Mammary epithelial cell (primary cell): ENCODE measurements at regions of chr9 and their contacts with region 1.

Region 1: GRCh38 chr9:36407122-36407723 is 7.2 kb upstream of the RNF38 start:
- DNase-seq: peak; percentile 60
- H3K4me3 ChIP-seq: no peak overlapping the region
- H3K27ac ChIP-seq: no peak overlapping the region
- H3K4me1 ChIP-seq: no peaks in the 10 kb centered on the region
- H3K27me3 ChIP-seq: no peaks in the 10 kb centered on the region
- CTCF ChIP-seq: peak; percentile 86 to 96

Region 2: DNA sequence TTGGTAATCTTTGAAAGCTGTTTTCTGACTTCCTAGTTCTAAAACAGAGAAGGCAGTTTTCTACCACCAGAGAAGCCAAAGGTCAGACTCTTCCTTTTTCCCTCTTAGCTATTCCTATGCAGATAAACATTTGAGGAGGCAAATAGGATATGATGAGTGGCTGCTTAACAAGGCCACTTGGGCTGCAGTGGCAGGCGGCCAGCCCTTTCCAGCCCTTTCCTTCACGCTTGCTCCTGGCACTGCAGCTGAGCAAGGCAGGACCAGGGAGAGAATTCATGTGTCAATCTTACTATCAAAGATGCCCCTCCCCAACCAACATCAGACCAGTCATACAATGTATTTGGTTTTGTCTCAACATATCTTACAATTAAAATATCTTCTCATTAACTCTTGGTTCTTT is 29.7 kb after region 1 on chr9:
- CTCF ChIA-PET with region 1: interaction called, 10 read pairs
- dilution Hi-C with region 1: no loop called
- in situ Hi-C with region 1: no loop called
- intact Hi-C with region 1: no loop called
- DNase-seq: no peak
- H3K4me3 ChIP-seq: no peak overlapping the region
- H3K27ac ChIP-seq: no peak overlapping the region
- H3K4me1 ChIP-seq: no peaks in the 10 kb centered on the region
- H3K27me3 ChIP-seq: no peaks in the 10 kb centered on the region
- CTCF ChIP-seq: no peak

Region 3: DNA sequence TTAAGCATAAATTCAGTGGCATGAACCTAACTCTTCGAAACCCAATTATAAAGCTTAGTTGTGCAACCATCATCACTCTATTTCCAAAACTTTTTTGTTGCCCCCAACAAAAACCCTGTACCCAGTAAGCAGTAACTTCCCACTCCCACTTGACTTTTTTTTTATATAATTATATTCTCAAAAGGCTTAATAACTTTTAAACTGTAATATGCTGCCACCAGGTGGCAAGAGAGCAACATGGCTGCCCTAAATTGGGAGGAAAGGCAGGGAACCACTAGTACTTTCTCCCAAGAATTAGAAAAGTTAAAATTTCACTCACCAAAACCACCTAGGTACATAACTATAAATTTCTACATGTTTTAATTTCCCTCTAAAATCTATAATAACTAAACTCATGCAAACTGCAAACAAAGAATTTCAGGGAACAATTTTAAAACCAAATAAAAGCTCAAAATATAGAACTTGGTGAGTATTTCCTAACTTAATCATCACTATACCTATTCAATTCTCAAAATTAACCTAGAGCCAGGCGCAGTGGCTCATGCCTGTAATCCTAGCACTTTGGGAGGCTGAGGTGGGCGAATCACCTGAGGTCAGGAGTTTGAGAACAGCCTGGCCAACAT is 43.0 kb after region 1 on chr9:
- CTCF ChIA-PET with region 1: interaction called, 8 read pairs
- dilution Hi-C with region 1: no loop called
- in situ Hi-C with region 1: no loop called
- intact Hi-C with region 1: loop called (anchors 1 kb)
- DNase-seq: peak; percentile 26
- H3K4me3 ChIP-seq: no peak overlapping the region
- H3K27ac ChIP-seq: no peak overlapping the region
- H3K4me1 ChIP-seq: no peaks in the 10 kb centered on the region
- H3K27me3 ChIP-seq: no peaks in the 10 kb centered on the region
- CTCF ChIP-seq: peak; percentile 65 to 74

Region 4: GRCh38 chr9:36551129-36551528 is 143.9 kb after region 1 on chr9:
- CTCF ChIA-PET with region 1: interaction called, 3 read pairs
- dilution Hi-C with region 1: no loop called
- in situ Hi-C with region 1: loop called in 1 of 2 experiments (anchors 10 kb)
- intact Hi-C with region 1: loop called (anchors 1 kb)
- DNase-seq: no peak
- H3K4me3 ChIP-seq: no peak overlapping the region
- H3K27ac ChIP-seq: no peak overlapping the region
- H3K4me1 ChIP-seq: no peaks in the 10 kb centered on the region
- H3K27me3 ChIP-seq: no peaks in the 10 kb centered on the region
- CTCF ChIP-seq: no peak

Region 5: GRCh38 chr9:36572515-36573418 is 165.5 kb after region 1 on chr9 and contains the start of gene MELK:
- CTCF ChIA-PET with region 1: no interaction called
- dilution Hi-C with region 1: no loop called
- in situ Hi-C with region 1: loop called in 1 of 2 experiments (anchors 10 kb)
- intact Hi-C with region 1: loop called (anchors 5 kb)
- DNase-seq: peak; percentile 79
- H3K4me3 ChIP-seq: peak within 1 kb of the TSS; percentile 67 to 100 (median 95)
- H3K27ac ChIP-seq: peak within 1 kb of the TSS; percentile 70
- H3K4me1 ChIP-seq: peaks cover 10% of the 10 kb centered on the region
- H3K27me3 ChIP-seq: no peaks in the 10 kb centered on the region
- CTCF ChIP-seq: no peak
- total RNA-seq, gene MELK: 10.8 to 40.8 TPM

Region 6: GRCh38 chr9:36597412-36598178 is 190.4 kb after region 1 on chr9:
- CTCF ChIA-PET with region 1: no interaction called
- dilution Hi-C with region 1: no loop called
- in situ Hi-C with region 1: no loop called
- intact Hi-C with region 1: loop called (anchors 1 kb)
- DNase-seq: peak; percentile 38
- H3K4me3 ChIP-seq: no peak overlapping the region
- H3K27ac ChIP-seq: no peak overlapping the region
- H3K4me1 ChIP-seq: no peaks in the 10 kb centered on the region
- H3K27me3 ChIP-seq: no peaks in the 10 kb centered on the region
- CTCF ChIP-seq: peak; percentile 76 to 90

Region 7: DNA sequence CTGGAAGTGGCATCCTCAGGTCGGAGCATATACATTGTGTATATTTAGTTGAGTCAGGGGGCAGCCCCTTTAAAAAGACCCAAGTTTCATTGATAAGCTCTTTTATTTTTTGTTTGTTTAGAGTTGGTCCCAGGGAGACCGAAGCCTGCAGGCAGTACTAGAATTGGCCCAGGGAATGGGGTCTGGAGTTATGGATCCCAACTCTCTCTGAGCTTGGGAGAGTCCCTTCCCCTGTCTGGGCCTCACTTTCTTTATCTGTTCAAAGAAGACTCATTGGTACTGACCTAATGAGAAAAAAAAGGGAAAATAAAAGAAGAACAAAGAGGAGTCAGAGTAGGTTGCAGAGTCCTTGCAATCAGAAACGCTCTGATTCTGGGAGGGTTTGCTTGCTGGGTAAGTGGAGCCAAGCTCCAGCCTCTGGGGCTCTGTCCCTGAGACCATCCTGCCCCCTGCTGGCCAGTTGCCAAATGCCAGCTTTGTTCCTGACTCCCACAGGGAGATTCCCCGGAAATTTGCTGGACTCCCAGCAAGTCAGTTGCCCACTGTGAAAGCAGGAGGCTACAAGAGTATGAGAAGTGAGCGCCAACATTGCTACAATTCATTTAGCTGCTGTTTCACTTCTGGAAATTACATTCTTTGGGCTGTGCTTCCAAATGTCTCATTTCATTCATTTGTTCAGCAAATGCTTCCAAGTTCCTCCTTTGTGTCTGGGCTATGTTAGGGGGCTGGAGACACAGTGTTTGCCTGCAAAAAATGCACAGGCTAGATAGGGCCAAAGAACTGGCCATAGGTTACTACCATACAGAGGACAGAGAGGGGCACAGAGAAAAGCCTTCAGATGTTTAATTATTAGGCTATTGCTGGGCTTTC is 321.7 kb after region 1 on chr9:
- CTCF ChIA-PET with region 1: interaction called, 13 read pairs
- dilution Hi-C with region 1: no loop called
- in situ Hi-C with region 1: loop called in 1 of 2 experiments (anchors 25 kb)
- intact Hi-C with region 1: loop called (anchors 1 kb)
- DNase-seq: peak; percentile 68
- H3K4me3 ChIP-seq: no peak overlapping the region
- H3K27ac ChIP-seq: no peak overlapping the region
- H3K4me1 ChIP-seq: no peaks in the 10 kb centered on the region
- H3K27me3 ChIP-seq: no peaks in the 10 kb centered on the region
- CTCF ChIP-seq: peak; percentile 80 to 89